K562 (cell line): ENCODE measurements at regions of chr2 and their contacts with region 1.

Region 1: GRCh38 chr2:177724398-177725287 is 332.1 kb downstream of the AGPS start:
- DNase-seq: peak; percentile 76 to 81 (median 79)
- ATAC-seq: peak; percentile 76
- H3K4me3 ChIP-seq: no peak overlapping the region
- H3K27ac ChIP-seq: no peak overlapping the region
- H3K4me1 ChIP-seq: peaks cover 0 to 29% of the 10 kb centered on the region in 2 experiments; a peak in 4 of 5 replicates
- H3K27me3 ChIP-seq: no peaks in the 10 kb centered on the region
- CTCF ChIP-seq: peak; percentile 87 to 96 (median 96)
- EP300 ChIP-seq: no peak
- POLR2A ChIP-seq: no peak
- RAD21 ChIP-seq: peak; percentile 92 to 98

Region 2: DNA sequence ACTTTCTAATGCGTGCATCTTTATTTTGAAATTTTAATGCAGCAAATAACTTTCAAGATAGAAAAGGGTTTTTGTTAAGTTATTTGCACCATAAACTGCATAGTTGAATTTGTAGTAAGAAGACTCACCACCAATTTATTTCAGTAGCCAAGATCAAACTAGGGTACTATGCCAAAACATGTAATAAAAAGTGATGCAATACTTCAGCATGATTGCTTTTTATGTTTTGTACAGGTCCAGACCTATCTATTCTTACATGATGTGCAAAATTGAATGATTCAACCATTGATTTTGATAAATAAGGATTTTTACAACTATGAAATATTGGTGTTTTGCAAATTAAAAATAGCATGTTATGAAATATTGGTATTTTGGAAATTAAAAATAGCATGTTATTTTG is 305.4 kb before region 1 on chr2:
- CTCF ChIA-PET with region 1: interaction called, 3 read pairs
- POLR2A ChIA-PET with region 1: no interaction called
- in situ Hi-C with region 1: no loop called
- intact Hi-C with region 1: loop called (anchors 5 kb)
- DNase-seq: no peak
- ATAC-seq: peak; percentile 37; the same call in 1 of the 3 replicates
- H3K4me3 ChIP-seq: no peak overlapping the region
- H3K27ac ChIP-seq: no peak overlapping the region
- H3K4me1 ChIP-seq: no peaks in the 10 kb centered on the region
- H3K27me3 ChIP-seq: no peaks in the 10 kb centered on the region
- CTCF ChIP-seq: no peak
- EP300 ChIP-seq: no peak
- POLR2A ChIP-seq: no peak
- RAD21 ChIP-seq: no peak

Region 3: GRCh38 chr2:177604271-177605065 is 120.2 kb before region 1 on chr2:
- CTCF ChIA-PET with region 1: no interaction called
- POLR2A ChIA-PET with region 1: no interaction called
- in situ Hi-C with region 1: no loop called
- intact Hi-C with region 1: loop called (anchors 10 kb)
- DNase-seq: peak; percentile 45 to 72 (median 53)
- ATAC-seq: peak; percentile 88
- H3K4me3 ChIP-seq: no peak overlapping the region
- H3K27ac ChIP-seq: no peak overlapping the region
- H3K4me1 ChIP-seq: no peaks in the 10 kb centered on the region
- H3K27me3 ChIP-seq: no peaks in the 10 kb centered on the region; a peak in 1 of 5 replicates
- CTCF ChIP-seq: peak; percentile 67 to 79 (median 77)
- EP300 ChIP-seq: no peak
- POLR2A ChIP-seq: no peak
- RAD21 ChIP-seq: peak; percentile 69 to 87

Region 4: DNA sequence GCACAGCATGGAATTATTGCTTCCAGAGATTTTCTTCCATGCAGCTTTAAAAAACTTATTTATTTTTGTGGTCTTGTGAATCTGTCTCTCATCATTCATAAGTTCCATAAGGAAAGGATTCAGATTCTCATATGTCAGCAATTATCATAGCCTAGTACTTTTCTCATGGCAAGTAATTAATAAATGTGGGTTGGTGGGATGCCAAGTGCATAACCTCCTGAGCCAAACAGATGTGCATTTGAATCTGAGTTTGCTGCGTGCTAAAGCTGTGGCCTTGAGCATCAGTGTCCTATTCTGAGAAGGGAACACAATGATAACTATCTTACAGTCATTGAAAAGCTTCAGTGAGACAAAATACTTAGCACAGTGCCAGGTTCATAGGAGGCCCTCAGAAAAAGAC is 16.1 kb after region 1 on chr2:
- CTCF ChIA-PET with region 1: interaction called, 3 read pairs
- POLR2A ChIA-PET with region 1: interaction called, 10 read pairs
- in situ Hi-C with region 1: no loop called
- intact Hi-C with region 1: no loop called
- DNase-seq: no peak
- ATAC-seq: no peak
- H3K4me3 ChIP-seq: no peak overlapping the region
- H3K27ac ChIP-seq: no peak overlapping the region
- H3K4me1 ChIP-seq: peaks cover 0 to 22% of the 10 kb centered on the region in 2 experiments; a peak in 4 of 5 replicates
- H3K27me3 ChIP-seq: no peaks in the 10 kb centered on the region
- CTCF ChIP-seq: no peak
- EP300 ChIP-seq: no peak
- POLR2A ChIP-seq: no peak
- RAD21 ChIP-seq: no peak

Region 5: GRCh38 chr2:177763532-177764265 is 39.1 kb after region 1 on chr2:
- CTCF ChIA-PET with region 1: interaction called, 4 read pairs
- POLR2A ChIA-PET with region 1: no interaction called
- in situ Hi-C with region 1: no loop called
- intact Hi-C with region 1: loop called (anchors 1 kb)
- DNase-seq: peak; percentile 74 to 90 (median 85)
- ATAC-seq: peak; percentile 98
- H3K4me3 ChIP-seq: no peak overlapping the region
- H3K27ac ChIP-seq: no peak overlapping the region
- H3K4me1 ChIP-seq: peaks cover 4 to 16% of the 10 kb centered on the region in 2 experiments; a peak in 4 of 5 replicates
- H3K27me3 ChIP-seq: no peaks in the 10 kb centered on the region
- CTCF ChIP-seq: peak; percentile 91 to 96 (median 92)
- EP300 ChIP-seq: no peak
- POLR2A ChIP-seq: no peak
- RAD21 ChIP-seq: peak; percentile 69 to 77

Region 6: GRCh38 chr2:177852389-177852788 is 127.7 kb after region 1 on chr2:
- CTCF ChIA-PET with region 1: no interaction called
- POLR2A ChIA-PET with region 1: no interaction called
- in situ Hi-C with region 1: no loop called
- intact Hi-C with region 1: no loop called
- DNase-seq: no peak
- ATAC-seq: no peak
- H3K4me3 ChIP-seq: no peak overlapping the region
- H3K27ac ChIP-seq: no peak overlapping the region
- H3K4me1 ChIP-seq: no peaks in the 10 kb centered on the region
- H3K27me3 ChIP-seq: peaks cover 0 to 5% of the 10 kb centered on the region in 2 experiments; a peak in 2 of 5 replicates
- CTCF ChIP-seq: no peak
- EP300 ChIP-seq: no peak
- POLR2A ChIP-seq: no peak
- RAD21 ChIP-seq: no peak

Region 7: GRCh38 chr2:179106676-179107428 is 1382.2 kb after region 1 on chr2:
- CTCF ChIA-PET with region 1: no interaction called
- POLR2A ChIA-PET with region 1: no interaction called
- in situ Hi-C with region 1: no loop called
- intact Hi-C with region 1: no loop called
- DNase-seq: peak in 1 of 4 experiments; percentile 44
- ATAC-seq: peak; percentile 39; the same call in 2 of the 3 replicates
- H3K4me3 ChIP-seq: no peak overlapping the region
- H3K27ac ChIP-seq: no peak overlapping the region
- H3K4me1 ChIP-seq: no peaks in the 10 kb centered on the region
- H3K27me3 ChIP-seq: no peaks in the 10 kb centered on the region
- CTCF ChIP-seq: no peak
- EP300 ChIP-seq: no peak
- POLR2A ChIP-seq: no peak
- RAD21 ChIP-seq: no peak